PC-3 (cell line): ENCODE measurements at regions of chr1 and their contacts with region 1.

Region 1: DNA sequence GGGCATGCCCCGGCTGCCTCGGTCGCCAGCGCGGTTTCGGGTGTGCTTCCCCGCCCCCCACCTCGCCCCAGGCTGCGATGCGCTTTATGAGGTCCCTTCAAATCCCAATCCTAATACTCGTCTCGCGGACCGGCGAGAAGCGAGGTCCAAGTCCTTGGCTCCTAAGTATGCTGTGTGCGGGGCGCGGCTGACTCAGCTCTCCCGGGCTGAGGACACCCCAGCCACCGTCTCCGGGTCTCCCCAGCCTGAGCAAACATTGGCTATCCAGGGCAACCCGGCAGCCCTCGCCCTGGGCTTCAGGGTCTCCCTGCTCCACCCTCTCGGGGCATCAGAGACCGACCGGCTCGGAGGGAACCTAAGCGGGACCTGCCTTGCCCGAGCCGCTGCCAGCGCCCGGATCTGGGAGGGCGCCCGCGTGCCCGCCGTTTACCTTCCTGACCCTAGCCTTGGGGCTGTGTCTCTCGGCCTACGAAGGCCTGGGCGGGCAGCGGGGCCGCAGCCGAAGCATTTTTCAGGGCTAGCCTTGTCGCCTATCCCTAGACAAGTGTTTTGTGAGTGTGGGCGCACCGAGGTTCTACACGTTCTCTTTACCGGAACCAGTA is 1.2 kb downstream of the ITPKB start:
- DNase-seq: peak; percentile 61
- ATAC-seq: peak; percentile 58
- H3K4me3 ChIP-seq: peak overlapping the region; percentile 81
- H3K27ac ChIP-seq: peak overlapping the region; percentile 47
- H3K4me1 ChIP-seq: peaks cover 13% of the 10 kb centered on the region
- H3K27me3 ChIP-seq: no peaks in the 10 kb centered on the region
- CTCF ChIP-seq: no peak

Region 2: GRCh38 chr1:226677027-226678020 is 60.6 kb before region 1 on chr1:
- CTCF ChIA-PET with region 1: no interaction called
- POLR2A ChIA-PET with region 1: no interaction called
- intact Hi-C with region 1: loop called (anchors 1 kb)
- DNase-seq: peak; percentile 99
- ATAC-seq: peak; percentile 98
- H3K4me3 ChIP-seq: peak overlapping the region; percentile 4; the same call in 1 of the 2 replicates
- H3K27ac ChIP-seq: peak overlapping the region; percentile 73
- H3K4me1 ChIP-seq: peaks cover 29% of the 10 kb centered on the region
- H3K27me3 ChIP-seq: no peaks in the 10 kb centered on the region
- CTCF ChIP-seq: no peak

Region 3: DNA sequence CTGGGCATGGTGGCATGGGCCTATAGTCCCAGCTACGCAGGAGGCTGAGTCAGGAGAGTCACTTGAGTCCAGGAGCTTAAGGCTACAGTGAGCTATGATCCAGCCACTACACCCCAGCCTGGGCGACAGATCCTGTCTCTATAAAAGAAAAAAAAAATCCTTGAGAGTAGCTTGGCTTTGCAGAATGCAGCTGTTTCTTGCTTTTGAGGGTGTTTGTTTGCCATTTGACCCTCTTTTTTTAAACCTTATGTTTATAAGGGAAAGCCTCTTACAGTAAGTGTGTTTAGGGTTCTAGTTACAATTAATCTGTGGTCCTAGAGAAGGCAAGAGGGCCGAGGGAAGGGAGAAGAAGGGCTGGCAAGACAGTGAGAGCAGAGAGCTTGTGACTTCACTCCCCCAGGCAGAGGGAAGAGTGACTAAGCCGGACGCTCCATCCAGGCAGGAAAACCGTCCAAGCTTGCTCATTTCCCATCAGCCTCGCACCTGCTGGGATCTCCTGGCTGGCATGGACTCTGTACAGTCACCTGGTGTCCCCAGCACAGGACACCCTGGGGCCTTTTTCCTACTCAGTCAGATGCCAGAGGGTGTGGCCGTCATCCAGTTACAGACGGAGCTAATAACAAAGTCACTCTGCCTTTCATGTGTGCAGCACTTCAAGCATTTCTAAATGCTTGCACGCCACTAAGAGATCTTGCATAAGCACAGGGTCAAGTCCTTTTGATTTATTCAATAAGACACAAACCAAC is 77.0 kb after region 1 on chr1:
- CTCF ChIA-PET with region 1: no interaction called
- POLR2A ChIA-PET with region 1: interaction called, 4 read pairs
- intact Hi-C with region 1: loop called (anchors 1 kb)
- DNase-seq: peak; percentile 100
- ATAC-seq: peak; percentile 97
- H3K4me3 ChIP-seq: peak overlapping the region; percentile 8; the same call in 1 of the 2 replicates
- H3K27ac ChIP-seq: peak overlapping the region; percentile 90
- H3K4me1 ChIP-seq: peaks cover 35% of the 10 kb centered on the region
- H3K27me3 ChIP-seq: no peaks in the 10 kb centered on the region
- CTCF ChIP-seq: no peak

Region 4: GRCh38 chr1:226882631-226883409 is 144.9 kb after region 1 on chr1:
- CTCF ChIA-PET with region 1: no interaction called
- POLR2A ChIA-PET with region 1: interaction called, 10 read pairs
- intact Hi-C with region 1: no loop called
- DNase-seq: peak; percentile 72
- ATAC-seq: peak; percentile 74
- H3K4me3 ChIP-seq: no peak overlapping the region
- H3K27ac ChIP-seq: no peak overlapping the region
- H3K4me1 ChIP-seq: peaks cover 10% of the 10 kb centered on the region
- H3K27me3 ChIP-seq: no peaks in the 10 kb centered on the region
- CTCF ChIP-seq: no peak